ENCODE measurements at regions of chr13 and their contacts with region 1.

Region 1: GRCh38 chr13:52968074-52968700 is 60.4 kb upstream of the OLFM4 start:
- DNase-seq: peak; percentile 83
- H3K4me3 Mint-ChIP-seq: no peak overlapping the region
- H3K27ac Mint-ChIP-seq: no peak overlapping the region
- H3K4me1 Mint-ChIP-seq: peaks cover 6% of the 10 kb centered on the region
- H3K27me3 Mint-ChIP-seq: peaks cover under 1% of the 10 kb centered on the region
- CTCF ChIP-seq: peak; percentile 95

Region 2: DNA sequence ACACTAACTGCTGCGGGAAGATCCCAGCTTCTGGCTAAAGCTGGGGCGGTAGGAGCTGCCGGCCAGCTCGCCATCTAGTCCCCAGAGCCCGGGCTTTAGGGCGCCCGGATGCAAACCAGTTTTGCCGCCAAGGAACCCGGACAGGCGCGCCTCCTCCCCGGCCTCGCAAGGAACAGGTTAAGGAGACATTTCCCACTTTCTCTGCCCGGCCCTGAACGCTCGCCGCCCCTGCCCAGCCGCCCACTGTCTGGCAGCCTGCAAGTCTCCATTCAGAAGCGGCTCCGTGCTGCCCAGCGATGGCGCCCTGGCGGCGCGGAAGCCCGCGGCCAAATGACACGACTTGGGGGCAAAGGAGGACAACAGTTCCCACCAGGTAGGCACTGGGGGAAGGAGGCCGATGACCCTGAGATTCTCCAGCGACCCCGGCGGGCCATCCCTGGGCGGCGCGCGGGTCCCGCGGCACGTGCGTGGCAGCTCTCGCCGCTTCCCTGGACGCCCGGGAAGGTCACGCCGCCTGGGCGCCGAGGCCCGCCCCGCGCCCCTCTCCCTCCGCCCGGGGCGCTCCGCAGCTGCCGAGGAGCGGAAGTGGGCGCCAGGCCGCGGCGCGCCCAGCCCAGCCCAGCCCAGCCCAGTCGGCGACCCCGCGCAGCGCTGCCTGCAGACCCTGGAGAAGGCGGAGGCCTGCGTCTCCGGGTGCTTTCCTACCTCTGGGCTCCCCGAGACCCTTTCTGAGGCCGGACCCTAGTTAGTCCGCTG is 368.2 kb before region 1 on chr13:
- CTCF ChIA-PET with region 1: interaction called, 3 read pairs
- POLR2A ChIA-PET with region 1: no interaction called
- intact Hi-C with region 1: loop called (anchors 5 kb)
- DNase-seq: peak; percentile 44
- H3K4me3 Mint-ChIP-seq: peak overlapping the region; percentile 78
- H3K27ac Mint-ChIP-seq: peak overlapping the region; percentile 96
- H3K4me1 Mint-ChIP-seq: peaks cover 17% of the 10 kb centered on the region
- H3K27me3 Mint-ChIP-seq: no peaks in the 10 kb centered on the region
- CTCF ChIP-seq: no peak

Region 3: DNA sequence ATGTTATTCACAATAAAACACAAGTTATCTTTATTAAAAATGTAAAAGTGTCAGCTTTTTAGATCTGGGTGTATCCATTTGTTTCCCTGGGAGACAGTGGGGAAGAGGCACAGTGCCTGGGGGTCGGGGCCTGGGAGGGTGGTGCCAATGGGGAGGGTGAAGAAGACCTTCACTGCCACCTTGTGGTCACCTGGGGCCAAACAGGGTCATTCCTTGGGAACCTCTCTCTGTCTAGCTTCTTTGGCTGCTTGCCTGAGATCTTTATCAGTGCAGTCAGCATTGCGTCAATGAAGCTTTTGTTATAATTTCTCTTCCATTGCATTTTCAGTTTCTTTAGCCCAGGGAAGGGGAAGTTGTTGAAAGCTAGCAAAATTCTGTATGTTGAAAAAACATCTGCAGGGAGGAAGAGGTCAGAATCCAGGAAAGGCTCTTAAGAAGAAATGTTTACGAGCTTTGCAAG is 158.8 kb before region 1 on chr13:
- CTCF ChIA-PET with region 1: interaction called, 15 read pairs
- POLR2A ChIA-PET with region 1: no interaction called
- intact Hi-C with region 1: no loop called
- DNase-seq: peak; percentile 92
- H3K4me3 Mint-ChIP-seq: no peak overlapping the region
- H3K27ac Mint-ChIP-seq: no peak overlapping the region
- H3K4me1 Mint-ChIP-seq: peaks cover 8% of the 10 kb centered on the region
- H3K27me3 Mint-ChIP-seq: peaks cover 23% of the 10 kb centered on the region
- CTCF ChIP-seq: peak; percentile 67

Region 4: GRCh38 chr13:52879950-52880741 is 88.0 kb before region 1 on chr13:
- CTCF ChIA-PET with region 1: interaction called, 11 read pairs
- POLR2A ChIA-PET with region 1: no interaction called
- intact Hi-C with region 1: no loop called
- DNase-seq: no peak
- H3K4me3 Mint-ChIP-seq: no peak overlapping the region
- H3K27ac Mint-ChIP-seq: no peak overlapping the region
- H3K4me1 Mint-ChIP-seq: no peaks in the 10 kb centered on the region
- H3K27me3 Mint-ChIP-seq: peaks cover 30% of the 10 kb centered on the region
- CTCF ChIP-seq: no peak

Region 5: DNA sequence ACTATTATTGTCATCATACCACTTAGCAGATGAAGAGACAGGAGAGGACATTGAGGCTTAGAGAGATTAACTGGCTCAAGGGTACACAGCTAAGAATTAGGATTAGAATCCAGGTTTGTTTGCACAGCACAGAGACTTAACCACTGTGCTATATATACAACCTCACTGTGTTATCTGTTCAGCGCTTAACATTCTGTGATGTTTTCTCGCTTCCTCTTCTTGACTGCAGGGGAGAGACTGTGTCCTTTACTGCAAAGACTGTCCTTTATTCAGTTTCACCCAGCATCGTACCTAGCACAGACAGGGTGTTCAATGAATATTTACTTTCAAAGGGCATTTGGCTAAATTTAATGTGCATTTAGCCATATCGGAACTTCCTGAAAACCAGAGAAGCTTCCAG is 64.9 kb before region 1 on chr13:
- CTCF ChIA-PET with region 1: interaction called, 12 read pairs
- POLR2A ChIA-PET with region 1: interaction called, 3 read pairs
- intact Hi-C with region 1: no loop called
- DNase-seq: no peak
- H3K4me3 Mint-ChIP-seq: no peak overlapping the region
- H3K27ac Mint-ChIP-seq: no peak overlapping the region
- H3K4me1 Mint-ChIP-seq: no peaks in the 10 kb centered on the region
- H3K27me3 Mint-ChIP-seq: peaks cover 22% of the 10 kb centered on the region
- CTCF ChIP-seq: no peak

Region 6: GRCh38 chr13:52947921-52948373 is 20.2 kb before region 1 on chr13:
- CTCF ChIA-PET with region 1: interaction called, 63 read pairs
- POLR2A ChIA-PET with region 1: no interaction called
- intact Hi-C with region 1: no loop called
- DNase-seq: no peak
- H3K4me3 Mint-ChIP-seq: no peak overlapping the region
- H3K27ac Mint-ChIP-seq: no peak overlapping the region
- H3K4me1 Mint-ChIP-seq: no peaks in the 10 kb centered on the region
- H3K27me3 Mint-ChIP-seq: peaks cover 18% of the 10 kb centered on the region
- CTCF ChIP-seq: no peak

Region 7: DNA sequence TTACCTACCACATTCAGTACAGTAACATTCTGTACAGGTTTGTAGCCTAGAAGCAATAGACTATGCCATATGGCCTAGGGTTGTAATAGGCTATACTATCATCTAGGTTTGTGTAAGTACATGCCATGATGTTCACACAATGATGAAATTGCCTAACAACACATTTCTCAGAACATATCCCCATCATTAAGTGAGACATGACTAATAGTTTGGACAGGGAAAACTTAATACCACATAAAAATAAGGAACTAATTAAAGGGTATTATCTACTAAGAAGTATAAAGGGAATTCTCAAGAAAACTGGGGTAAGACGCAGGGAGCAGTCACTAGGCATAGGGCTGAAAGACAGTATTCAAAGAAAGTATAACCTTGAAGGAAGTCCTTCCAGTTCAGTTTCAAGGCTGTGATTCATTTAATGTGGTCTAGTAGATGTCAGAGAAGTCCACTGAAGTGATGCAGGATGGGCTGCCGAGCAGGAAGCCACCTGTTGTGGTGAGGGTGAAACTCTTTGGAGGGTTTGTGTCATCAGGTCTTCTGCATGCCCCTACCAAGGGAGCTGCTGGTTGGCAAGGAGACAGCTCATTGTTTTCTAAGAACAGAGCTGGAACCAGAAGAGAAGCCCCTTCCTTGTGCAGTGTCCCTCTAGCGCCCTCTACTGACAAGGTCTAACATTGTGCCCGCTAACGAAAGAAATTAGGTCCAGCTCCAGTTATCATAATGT is 183.3 kb after region 1 on chr13:
- CTCF ChIA-PET with region 1: interaction called, 5 read pairs
- POLR2A ChIA-PET with region 1: no interaction called
- intact Hi-C with region 1: loop called (anchors 1 kb)
- DNase-seq: peak; percentile 78
- H3K4me3 Mint-ChIP-seq: no peak overlapping the region
- H3K27ac Mint-ChIP-seq: no peak overlapping the region
- H3K4me1 Mint-ChIP-seq: peaks cover 12% of the 10 kb centered on the region
- H3K27me3 Mint-ChIP-seq: peaks cover 29% of the 10 kb centered on the region
- CTCF ChIP-seq: peak; percentile 73

Region 8: GRCh38 chr13:53411463-53411862 is 443.3 kb after region 1 on chr13:
- CTCF ChIA-PET with region 1: no interaction called
- POLR2A ChIA-PET with region 1: no interaction called
- intact Hi-C with region 1: no loop called
- DNase-seq: no peak
- H3K4me3 Mint-ChIP-seq: no peak overlapping the region
- H3K27ac Mint-ChIP-seq: no peak overlapping the region
- H3K4me1 Mint-ChIP-seq: no peaks in the 10 kb centered on the region
- H3K27me3 Mint-ChIP-seq: no peaks in the 10 kb centered on the region
- CTCF ChIP-seq: no peak